Endothelial cell of umbilical vein (primary cell): ENCODE measurements at regions of chr2 and their contacts with region 1.

Region 1: DNA sequence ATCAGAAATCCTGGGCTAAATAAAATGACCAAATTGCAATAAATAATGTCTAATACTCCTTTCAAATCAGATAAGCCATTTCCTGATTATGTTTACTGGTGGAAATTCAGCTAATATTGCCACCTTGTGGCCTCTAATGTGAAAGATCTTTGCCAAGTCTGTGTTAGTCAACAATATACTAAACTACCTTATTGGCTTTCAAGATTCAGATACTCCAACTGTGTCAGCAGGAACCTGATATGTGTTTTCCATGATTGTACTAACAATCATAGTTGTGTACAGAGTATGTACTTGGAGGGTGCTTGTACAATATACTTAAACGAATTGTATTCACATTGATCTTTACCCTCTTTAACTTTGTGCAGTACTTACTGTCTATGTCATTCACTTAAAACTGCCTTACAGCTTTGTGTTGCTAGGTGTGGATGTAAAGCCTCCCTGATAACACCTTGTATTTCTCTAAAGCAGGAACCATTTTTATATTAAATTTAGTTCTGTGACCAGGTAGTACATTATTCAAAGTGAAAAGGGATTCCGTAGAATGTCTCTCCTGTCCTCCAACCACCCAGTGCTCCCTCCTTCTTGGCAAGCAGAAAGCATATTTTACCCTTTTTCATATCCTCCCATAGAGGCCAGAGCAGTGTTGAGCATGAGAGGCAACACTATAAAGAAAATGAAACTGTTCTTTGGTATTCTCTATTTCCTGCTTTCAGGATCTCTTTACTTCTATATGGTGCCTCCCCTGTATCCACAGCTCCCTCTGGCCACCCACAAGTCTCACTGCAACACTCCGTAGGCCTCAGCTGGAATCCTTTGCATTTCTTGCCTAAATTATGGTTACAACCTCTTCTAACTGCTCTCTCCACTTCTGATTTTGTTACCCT is 75.2 kb upstream of the C2orf15 start:
- DNase-seq: peak; percentile 68
- H3K4me3 ChIP-seq: peak overlapping the region in 1 of 3 experiments; percentile 26
- H3K27ac ChIP-seq: no peak overlapping the region
- H3K4me1 ChIP-seq: peaks cover 20% of the 10 kb centered on the region
- H3K27me3 ChIP-seq: no peaks in the 10 kb centered on the region
- CTCF ChIP-seq: peak; percentile 39 to 61
- POLR2A ChIP-seq: no peak

Region 2: GRCh38 chr2:98412751-98413458 is 653.4 kb before region 1 on chr2:
- CTCF ChIA-PET with region 1: interaction called, 3 read pairs
- POLR2A ChIA-PET with region 1: no interaction called
- dilution Hi-C with region 1: no loop called
- intact Hi-C with region 1: loop called (anchors 1 kb)
- DNase-seq: peak; percentile 87
- H3K4me3 ChIP-seq: no peak overlapping the region
- H3K27ac ChIP-seq: no peak overlapping the region
- H3K4me1 ChIP-seq: peaks cover 3% of the 10 kb centered on the region
- H3K27me3 ChIP-seq: no peaks in the 10 kb centered on the region
- CTCF ChIP-seq: peak; percentile 58 to 61
- POLR2A ChIP-seq: no peak

Region 3: DNA sequence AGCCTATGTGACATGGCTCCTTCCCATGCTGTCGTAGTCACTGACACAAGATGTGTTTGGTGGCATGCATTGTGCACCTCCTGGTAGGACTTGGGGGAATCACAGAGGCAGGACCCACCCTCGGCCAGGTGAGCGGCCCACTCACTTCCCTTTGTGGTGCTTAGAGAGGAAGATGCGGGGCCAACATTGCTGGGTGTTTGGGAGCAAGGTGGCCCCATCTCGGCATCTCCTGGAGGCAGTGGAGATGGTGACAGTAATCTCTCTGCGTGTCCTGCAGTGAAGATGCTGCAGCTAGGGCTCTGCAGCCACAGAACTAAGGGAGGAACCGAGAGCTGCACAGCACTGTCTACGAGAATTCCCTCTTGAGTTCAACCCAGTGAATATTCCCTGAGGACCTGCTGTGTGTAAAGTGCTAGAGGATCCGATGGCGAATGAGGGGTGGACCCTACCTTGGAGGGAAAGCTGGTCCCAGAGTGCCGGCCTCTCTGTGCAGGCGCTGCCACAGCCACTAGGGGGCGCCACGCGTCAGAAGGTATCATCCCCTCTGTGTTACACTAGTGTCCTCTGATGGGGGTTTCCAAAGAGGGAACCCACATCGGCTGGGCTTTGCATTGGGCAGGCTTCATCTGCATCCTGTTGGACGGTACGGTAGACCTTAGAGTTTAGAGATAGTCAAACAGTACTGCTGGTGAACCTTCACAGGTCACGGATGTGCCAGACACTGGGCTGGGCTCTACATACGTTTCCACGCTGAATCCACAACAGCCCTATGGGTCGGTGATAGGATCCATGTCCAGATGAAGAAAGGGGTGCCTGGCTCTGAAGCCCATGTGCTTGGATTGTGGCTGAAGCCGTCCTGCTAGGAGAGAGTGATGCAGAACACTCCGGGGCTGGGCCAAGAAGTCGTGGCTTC is 497.2 kb before region 1 on chr2:
- CTCF ChIA-PET with region 1: interaction called, 20 read pairs
- POLR2A ChIA-PET with region 1: no interaction called
- dilution Hi-C with region 1: no loop called
- intact Hi-C with region 1: loop called (anchors 1 kb)
- DNase-seq: peak; percentile 30
- H3K4me3 ChIP-seq: no peak overlapping the region
- H3K27ac ChIP-seq: no peak overlapping the region
- H3K4me1 ChIP-seq: no peaks in the 10 kb centered on the region
- H3K27me3 ChIP-seq: no peaks in the 10 kb centered on the region
- CTCF ChIP-seq: peak; percentile 95
- POLR2A ChIP-seq: no peak

Region 4: GRCh38 chr2:98608116-98608999 is 458.0 kb before region 1 on chr2 and contains the starts of genes COA5 and UNC50:
- CTCF ChIA-PET with region 1: no interaction called
- POLR2A ChIA-PET with region 1: no interaction called
- dilution Hi-C with region 1: no loop called
- intact Hi-C with region 1: loop called (anchors 2 kb)
- DNase-seq: peak; percentile 92
- H3K4me3 ChIP-seq: peak within 1 kb of the TSS; percentile 95 to 100 (median 98)
- H3K27ac ChIP-seq: peak within 1 kb of the TSS; percentile 98
- H3K4me1 ChIP-seq: peaks cover 32% of the 10 kb centered on the region
- H3K27me3 ChIP-seq: no peaks in the 10 kb centered on the region
- CTCF ChIP-seq: no peak
- POLR2A ChIP-seq: peak; percentile 91
- total RNA-seq, gene COA5: 17.7 and 18.2 TPM in 2 replicates
- total RNA-seq, gene UNC50: 33.5 and 35.3 TPM in 2 replicates

Region 5: GRCh38 chr2:98731041-98731893 is 335.1 kb before region 1 on chr2 and contains the start of gene MGAT4A:
- CTCF ChIA-PET with region 1: interaction called, 5 read pairs
- POLR2A ChIA-PET with region 1: no interaction called
- dilution Hi-C with region 1: no loop called
- intact Hi-C with region 1: loop called (anchors 2 kb)
- DNase-seq: peak; percentile 52
- H3K4me3 ChIP-seq: peak within 1 kb of the TSS; percentile 64 to 97 (median 77)
- H3K27ac ChIP-seq: peak within 1 kb of the TSS; percentile 60
- H3K4me1 ChIP-seq: peaks cover 48% of the 10 kb centered on the region
- H3K27me3 ChIP-seq: no peaks in the 10 kb centered on the region
- CTCF ChIP-seq: no peak
- POLR2A ChIP-seq: peak; percentile 68
- total RNA-seq, gene MGAT4A: 42.2 and 47.6 TPM in 2 replicates

Region 6: GRCh38 chr2:98880266-98881152 is 185.8 kb before region 1 on chr2:
- CTCF ChIA-PET with region 1: interaction called, 11 read pairs
- POLR2A ChIA-PET with region 1: no interaction called
- dilution Hi-C with region 1: no loop called
- intact Hi-C with region 1: no loop called
- DNase-seq: no peak
- H3K4me3 ChIP-seq: no peak overlapping the region
- H3K27ac ChIP-seq: no peak overlapping the region
- H3K4me1 ChIP-seq: no peaks in the 10 kb centered on the region
- H3K27me3 ChIP-seq: no peaks in the 10 kb centered on the region
- CTCF ChIP-seq: peak in 1 of 2 donors; percentile 8
- POLR2A ChIP-seq: no peak

Region 7: GRCh38 chr2:98936353-98937351 is 129.7 kb before region 1 on chr2:
- CTCF ChIA-PET with region 1: interaction called, 13 read pairs
- POLR2A ChIA-PET with region 1: no interaction called
- dilution Hi-C with region 1: no loop called
- intact Hi-C with region 1: loop called (anchors 5 kb)
- DNase-seq: peak; percentile 24
- H3K4me3 ChIP-seq: peak overlapping the region; percentile 24 to 46 (median 43)
- H3K27ac ChIP-seq: no peak overlapping the region
- H3K4me1 ChIP-seq: peaks cover 7% of the 10 kb centered on the region
- H3K27me3 ChIP-seq: peaks cover 30 to 39% of the 10 kb centered on the region in 2 experiments
- CTCF ChIP-seq: peak; percentile 15 to 49
- POLR2A ChIP-seq: no peak